Activated CD4-positive, alpha-beta T cell treated with anti-CD3 and anti-CD28 coated beads for 36 hours (primary cell): ENCODE measurements at regions of chr1 and their contacts with region 1.

Region 1: DNA sequence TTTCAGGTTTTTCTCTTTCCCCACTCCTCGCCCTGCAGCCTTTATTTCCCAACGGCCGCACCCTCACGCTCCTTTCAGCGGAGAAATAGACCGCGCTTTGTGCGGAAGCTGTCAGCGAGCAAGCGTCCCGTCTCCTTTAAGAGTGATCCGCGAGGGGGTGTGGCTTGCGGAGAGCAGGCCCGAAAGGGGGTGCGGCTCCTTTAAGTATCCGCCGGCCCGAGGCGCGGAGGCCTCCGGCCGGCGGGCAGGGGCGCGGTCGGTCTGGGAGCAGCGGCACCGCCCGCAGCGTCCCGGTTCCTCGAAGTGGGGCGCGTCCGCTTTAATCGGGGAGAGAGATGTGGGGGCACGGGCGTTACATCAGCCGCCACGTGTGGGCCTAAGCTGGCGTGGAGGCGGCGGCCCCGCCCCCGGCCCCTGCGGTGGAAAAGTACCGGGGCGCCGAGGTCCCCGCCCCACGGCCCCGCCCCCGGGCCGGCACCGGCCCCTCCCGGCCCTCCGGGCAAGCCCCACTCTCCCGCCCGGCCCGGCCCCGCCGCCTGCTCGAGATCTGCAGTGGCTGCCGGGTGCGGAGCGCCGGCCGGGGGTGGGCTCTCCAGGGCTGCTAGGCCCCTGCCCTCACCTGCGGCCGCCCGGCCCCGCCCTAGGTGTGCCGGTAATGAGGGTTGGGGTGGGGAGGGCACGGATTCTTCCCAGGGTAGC is 1.2 kb downstream of the SLC6A9 start:
- DNase-seq: peak; percentile 94
- ATAC-seq: peak; percentile 83
- H3K4me3 Mint-ChIP-seq: peak overlapping the region; percentile 88
- H3K27ac Mint-ChIP-seq: peak overlapping the region; percentile 96
- H3K4me1 Mint-ChIP-seq: peaks cover 24% of the 10 kb centered on the region
- H3K27me3 Mint-ChIP-seq: no peaks in the 10 kb centered on the region

Region 2: DNA sequence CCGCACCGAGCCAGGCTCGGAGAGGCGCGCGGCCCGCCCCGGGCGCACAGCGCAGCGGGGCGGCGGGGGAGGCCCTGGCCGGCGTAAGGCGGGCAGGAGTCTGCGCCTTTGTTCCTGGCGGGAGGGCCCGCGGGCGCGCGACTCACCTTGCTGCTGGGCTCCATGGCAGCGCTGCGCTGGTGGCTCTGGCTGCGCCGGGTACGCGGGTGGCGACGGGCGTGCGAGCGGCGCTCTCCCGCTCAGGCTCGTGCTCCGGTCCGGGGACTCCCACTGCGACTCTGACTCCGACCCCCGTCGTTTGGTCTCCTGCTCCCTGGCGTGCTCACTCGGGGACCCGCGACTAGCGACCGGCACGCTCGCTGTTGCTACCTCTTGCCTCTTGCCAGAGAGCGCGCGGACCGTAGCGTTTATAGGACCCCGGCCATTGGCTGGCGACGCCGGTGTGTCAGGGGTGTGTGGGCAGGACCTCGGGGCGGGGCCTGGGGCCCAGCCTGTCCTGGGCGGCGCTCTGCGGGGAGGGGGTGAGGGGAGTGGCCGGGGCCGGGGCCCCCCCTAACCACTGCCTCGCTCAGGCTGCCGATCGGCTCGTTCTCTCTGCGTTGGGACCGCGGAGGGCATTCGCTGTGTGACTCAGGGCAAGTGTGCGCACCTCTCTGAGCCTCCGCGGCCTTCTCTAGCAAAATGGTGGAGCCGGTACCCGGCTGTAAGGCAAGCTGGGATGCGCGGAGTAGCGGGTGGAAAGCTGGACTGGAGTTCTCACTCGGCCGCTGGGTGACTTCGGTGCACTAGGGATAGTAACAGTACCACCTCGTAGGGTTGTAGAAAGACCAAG is 1071.4 kb before region 1 on chr1 and contains the start of gene SLC2A1:
- CTCF ChIA-PET with region 1: no interaction called
- POLR2A ChIA-PET with region 1: no interaction called
- intact Hi-C with region 1: loop called in 1 of 2 experiments (anchors 2 kb)
- DNase-seq: peak; percentile 99
- ATAC-seq: peak; percentile 89
- H3K4me3 Mint-ChIP-seq: peak within 1 kb of the TSS; percentile 89
- H3K27ac Mint-ChIP-seq: peak within 1 kb of the TSS; percentile 97
- H3K4me1 Mint-ChIP-seq: peaks cover 47% of the 10 kb centered on the region
- H3K27me3 Mint-ChIP-seq: peaks cover 6% of the 10 kb centered on the region
- total RNA-seq, gene SLC2A1: 115 to 125 TPM

Region 3: DNA sequence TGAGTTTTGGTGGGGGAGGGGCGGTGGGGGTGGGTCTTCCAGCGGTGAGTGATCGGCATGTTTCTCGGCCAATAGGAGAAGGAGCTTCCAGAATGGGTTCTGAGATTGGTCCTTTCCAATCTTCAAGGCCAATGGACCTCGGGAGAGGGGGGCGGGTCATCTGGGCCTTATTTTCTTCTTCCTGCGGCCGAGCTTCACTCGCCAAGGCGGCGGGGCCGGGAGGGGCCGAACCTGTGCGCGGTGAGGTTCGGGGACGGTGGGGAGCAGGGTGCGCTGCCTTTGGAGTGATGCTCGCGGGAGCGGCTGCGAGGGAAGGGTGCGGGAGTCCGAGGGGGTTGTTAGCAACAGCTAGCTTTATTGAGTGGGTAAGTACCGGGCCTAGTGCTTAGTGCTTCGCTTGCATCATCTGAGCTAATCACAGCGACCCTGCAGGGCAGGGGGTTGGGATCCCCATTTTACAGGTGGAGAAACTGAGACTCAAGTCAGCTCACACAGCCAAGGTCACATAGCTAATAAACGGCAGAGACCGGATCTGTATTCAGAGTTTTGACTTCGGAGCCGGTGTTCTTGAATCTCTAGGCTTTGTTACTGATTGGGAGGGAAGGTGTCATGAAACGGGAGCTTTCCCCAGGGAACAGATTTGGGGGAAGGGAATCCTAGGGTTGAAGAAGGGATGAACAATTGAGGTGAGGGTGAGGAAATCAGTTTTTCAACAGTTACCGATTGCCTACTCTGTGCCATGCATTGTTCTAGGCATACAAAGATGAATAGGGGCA is 379.6 kb before region 1 on chr1:
- CTCF ChIA-PET with region 1: no interaction called
- POLR2A ChIA-PET with region 1: no interaction called
- intact Hi-C with region 1: loop called in 1 of 2 experiments (anchors 1 kb)
- DNase-seq: peak; percentile 95
- ATAC-seq: peak; percentile 81
- H3K4me3 Mint-ChIP-seq: peak overlapping the region; percentile 89
- H3K27ac Mint-ChIP-seq: peak overlapping the region; percentile 97
- H3K4me1 Mint-ChIP-seq: peaks cover 31% of the 10 kb centered on the region
- H3K27me3 Mint-ChIP-seq: no peaks in the 10 kb centered on the region

Region 4: DNA sequence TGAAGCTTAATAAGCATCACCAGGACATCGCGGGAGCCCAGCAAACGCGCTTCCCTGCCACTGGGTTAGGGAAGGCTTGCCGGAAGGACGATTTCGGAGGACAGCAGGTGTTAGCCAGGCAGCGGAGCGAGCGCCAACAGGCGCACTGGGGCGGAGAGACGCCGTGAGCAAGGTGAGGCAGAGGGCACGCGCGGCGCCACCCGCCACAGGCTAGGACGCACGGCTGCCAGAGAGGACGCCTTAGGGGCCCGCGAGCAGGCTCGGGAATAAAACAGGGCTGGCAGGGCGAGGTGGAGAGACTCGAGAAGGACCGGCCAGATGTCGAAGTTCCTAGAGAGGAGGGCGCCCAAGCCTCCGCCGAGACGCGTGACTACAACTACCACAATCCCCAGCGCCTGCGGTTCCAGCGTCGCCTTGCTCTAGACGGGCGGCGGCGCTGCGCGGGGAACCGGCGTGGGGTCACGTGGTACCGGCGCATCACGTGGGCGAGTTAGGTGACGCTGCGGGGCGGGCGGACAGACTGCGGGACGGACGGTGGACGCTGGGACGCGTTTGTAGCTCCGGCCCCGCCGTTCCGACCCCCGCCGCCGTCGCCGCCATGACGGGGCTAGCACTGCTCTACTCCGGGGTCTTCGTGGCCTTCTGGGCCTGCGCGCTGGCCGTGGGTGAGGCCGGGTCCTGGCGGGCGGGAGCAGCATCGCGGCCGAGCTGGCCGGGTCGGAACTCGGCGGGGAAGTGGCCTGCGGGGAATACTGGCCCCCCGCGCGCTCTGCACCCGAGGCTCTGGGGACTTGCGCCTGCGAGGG is 55.4 kb before region 1 on chr1 and contains the start of gene ATP6V0B:
- CTCF ChIA-PET with region 1: no interaction called
- POLR2A ChIA-PET with region 1: interaction called, 5 read pairs
- intact Hi-C with region 1: loop called in 1 of 2 experiments (anchors 1 kb)
- DNase-seq: peak; percentile 99
- ATAC-seq: peak; percentile 76
- H3K4me3 Mint-ChIP-seq: peak within 1 kb of the TSS; percentile 81
- H3K27ac Mint-ChIP-seq: peak within 1 kb of the TSS; percentile 88
- H3K4me1 Mint-ChIP-seq: peaks cover 48% of the 10 kb centered on the region
- H3K27me3 Mint-ChIP-seq: no peaks in the 10 kb centered on the region
- total RNA-seq, gene ATP6V0B: 39.4 to 75.6 TPM

Region 5: GRCh38 chr1:43991476-43992231 is 38.4 kb before region 1 on chr1 and contains the start of gene CCDC24:
- CTCF ChIA-PET with region 1: interaction called, 3 read pairs
- POLR2A ChIA-PET with region 1: no interaction called
- intact Hi-C with region 1: loop called (anchors 1 kb)
- DNase-seq: peak; percentile 82
- ATAC-seq: peak; percentile 82
- H3K4me3 Mint-ChIP-seq: peak within 1 kb of the TSS; percentile 79
- H3K27ac Mint-ChIP-seq: peak within 1 kb of the TSS; percentile 65
- H3K4me1 Mint-ChIP-seq: peaks cover 8% of the 10 kb centered on the region
- H3K27me3 Mint-ChIP-seq: no peaks in the 10 kb centered on the region
- total RNA-seq, gene CCDC24: 1.2 to 2.0 TPM

Region 6: GRCh38 chr1:44354840-44355581 is 325.0 kb after region 1 on chr1 and contains the start of gene ERI3:
- CTCF ChIA-PET with region 1: no interaction called
- POLR2A ChIA-PET with region 1: no interaction called
- intact Hi-C with region 1: loop called in 1 of 2 experiments (anchors 1 kb)
- DNase-seq: peak; percentile 98
- ATAC-seq: peak; percentile 100
- H3K4me3 Mint-ChIP-seq: peak within 1 kb of the TSS; percentile 90
- H3K27ac Mint-ChIP-seq: peak within 1 kb of the TSS; percentile 82
- H3K4me1 Mint-ChIP-seq: peaks cover 34% of the 10 kb centered on the region
- H3K27me3 Mint-ChIP-seq: no peaks in the 10 kb centered on the region
- total RNA-seq, gene ERI3: 36.7 to 41.3 TPM